ENCODE measurements at regions of chr1 and their contacts with region 1.

Region 1: DNA sequence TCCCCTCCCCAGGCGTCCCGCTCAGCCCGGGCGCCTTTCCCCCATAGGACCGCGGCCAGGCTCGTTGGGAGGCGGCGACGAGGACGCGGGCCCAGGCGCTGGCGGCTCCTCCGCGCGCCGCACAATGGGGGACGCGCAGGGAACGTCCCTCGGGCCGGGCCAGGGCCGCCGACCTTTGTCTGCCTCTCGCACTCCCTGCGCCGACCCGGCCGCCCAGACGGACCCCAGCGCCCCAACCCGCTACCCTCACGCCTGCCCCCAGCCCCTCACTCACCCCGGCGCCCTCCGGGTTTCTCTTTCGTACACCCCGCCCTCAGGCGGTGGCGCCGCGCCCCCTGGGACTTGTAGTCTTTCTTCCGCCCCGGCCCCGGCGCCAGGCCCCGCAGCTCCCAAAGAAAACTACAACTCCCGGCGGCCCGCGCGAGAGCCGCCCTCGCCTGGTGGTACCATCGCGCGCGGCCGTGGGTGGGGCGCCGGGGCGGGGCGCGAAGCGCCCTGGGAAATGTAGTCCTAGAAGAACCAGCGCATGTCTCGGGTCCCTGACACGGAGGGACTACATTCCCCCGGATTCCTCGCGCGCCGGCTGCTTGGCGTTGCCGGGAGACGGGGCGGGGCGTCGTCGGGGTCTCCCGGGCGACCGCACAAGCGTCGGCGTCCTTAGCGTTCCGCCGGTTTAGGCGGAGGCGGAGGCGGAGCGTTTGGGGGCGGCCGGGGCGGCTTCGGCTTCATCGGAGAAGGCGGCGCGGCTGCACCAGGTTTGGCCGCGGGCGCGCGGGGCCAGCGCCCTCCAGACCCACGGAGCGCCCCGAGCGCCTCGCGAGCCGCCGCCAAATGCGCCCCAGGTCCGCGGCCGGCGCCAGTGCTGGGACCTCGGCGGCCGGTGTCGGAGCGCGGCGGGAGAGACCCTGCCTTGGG is at the start of gene C1orf159:
- DNase-seq: peak; percentile 96 to 99 (median 98)
- ATAC-seq: peak; percentile 97
- H3K4me3 ChIP-seq: peak within 1 kb of the TSS; percentile 59
- H3K4me3 Mint-ChIP-seq: peak within 1 kb of the TSS; percentile 74 to 90 (median 86)
- H3K27ac ChIP-seq: peak within 1 kb of the TSS; percentile 76
- H3K27ac Mint-ChIP-seq: peak within 1 kb of the TSS in 7 of 9 donors; percentile 66 to 90 (median 77)
- H3K4me1 ChIP-seq: peaks cover 0 to 4% of the 10 kb centered on the region in 2 donors
- H3K4me1 Mint-ChIP-seq: peaks cover 0 to 20% (median 13%) of the 10 kb centered on the region in 7 donors
- H3K27me3 ChIP-seq: no peaks in the 10 kb centered on the region
- H3K27me3 Mint-ChIP-seq: peaks cover 0 to 13% (median 0%) of the 10 kb centered on the region in 5 donors
- total RNA-seq, gene C1orf159: 17.6 to 21.9 (median 19.6) TPM

Region 2: GRCh38 chr1:1019122-1019999 is 96.7 kb before region 1 on chr1:
- CTCF ChIA-PET with region 1: no interaction called
- POLR2A ChIA-PET with region 1: interaction called, 3 read pairs
- intact Hi-C with region 1: loop called in 1 of 2 experiments (anchors 1 kb)
- DNase-seq: peak; percentile 69 to 90 (median 82)
- ATAC-seq: peak; percentile 93
- H3K4me3 ChIP-seq: peak overlapping the region; percentile 11
- H3K4me3 Mint-ChIP-seq: peak overlapping the region in 9 of 10 donors; percentile 48 to 80 (median 68)
- H3K27ac ChIP-seq: peak overlapping the region; percentile 27
- H3K27ac Mint-ChIP-seq: peak overlapping the region in 4 of 9 donors; percentile 40 to 65 (median 55)
- H3K4me1 ChIP-seq: peaks cover 4 to 10% of the 10 kb centered on the region in 2 donors
- H3K4me1 Mint-ChIP-seq: peaks cover 9 to 26% (median 15%) of the 10 kb centered on the region in 7 donors
- H3K27me3 ChIP-seq: no peaks in the 10 kb centered on the region
- H3K27me3 Mint-ChIP-seq: peaks cover 0 to 17% (median 0%) of the 10 kb centered on the region in 5 donors

Region 3: GRCh38 chr1:1069061-1069708 is 46.9 kb before region 1 on chr1:
- CTCF ChIA-PET with region 1: no interaction called
- POLR2A ChIA-PET with region 1: no interaction called
- intact Hi-C with region 1: loop called in 1 of 2 experiments (anchors 1 kb)
- DNase-seq: peak; percentile 86 to 98 (median 92)
- ATAC-seq: peak; percentile 83
- H3K4me3 ChIP-seq: peak overlapping the region; percentile 81
- H3K4me3 Mint-ChIP-seq: peak overlapping the region; percentile 52 to 88 (median 78)
- H3K27ac ChIP-seq: peak overlapping the region; percentile 73
- H3K27ac Mint-ChIP-seq: peak overlapping the region in 6 of 9 donors; percentile 36 to 88 (median 72)
- H3K4me1 ChIP-seq: peaks cover 4 to 10% of the 10 kb centered on the region in 2 donors
- H3K4me1 Mint-ChIP-seq: peaks cover 0 to 9% (median 3%) of the 10 kb centered on the region in 7 donors
- H3K27me3 ChIP-seq: no peaks in the 10 kb centered on the region
- H3K27me3 Mint-ChIP-seq: no peaks in the 10 kb centered on the region

Region 4: GRCh38 chr1:1128454-1129139 is 12.6 kb after region 1 on chr1:
- CTCF ChIA-PET with region 1: no interaction called
- POLR2A ChIA-PET with region 1: no interaction called
- intact Hi-C with region 1: no loop called
- DNase-seq: no peak
- ATAC-seq: no peak
- H3K4me3 ChIP-seq: no peak overlapping the region
- H3K4me3 Mint-ChIP-seq: no peak overlapping the region
- H3K27ac ChIP-seq: no peak overlapping the region
- H3K27ac Mint-ChIP-seq: no peak overlapping the region
- H3K4me1 ChIP-seq: no peaks in the 10 kb centered on the region
- H3K4me1 Mint-ChIP-seq: peaks cover 0 to 5% (median 0%) of the 10 kb centered on the region in 7 donors
- H3K27me3 ChIP-seq: no peaks in the 10 kb centered on the region
- H3K27me3 Mint-ChIP-seq: no peaks in the 10 kb centered on the region

Region 5: DNA sequence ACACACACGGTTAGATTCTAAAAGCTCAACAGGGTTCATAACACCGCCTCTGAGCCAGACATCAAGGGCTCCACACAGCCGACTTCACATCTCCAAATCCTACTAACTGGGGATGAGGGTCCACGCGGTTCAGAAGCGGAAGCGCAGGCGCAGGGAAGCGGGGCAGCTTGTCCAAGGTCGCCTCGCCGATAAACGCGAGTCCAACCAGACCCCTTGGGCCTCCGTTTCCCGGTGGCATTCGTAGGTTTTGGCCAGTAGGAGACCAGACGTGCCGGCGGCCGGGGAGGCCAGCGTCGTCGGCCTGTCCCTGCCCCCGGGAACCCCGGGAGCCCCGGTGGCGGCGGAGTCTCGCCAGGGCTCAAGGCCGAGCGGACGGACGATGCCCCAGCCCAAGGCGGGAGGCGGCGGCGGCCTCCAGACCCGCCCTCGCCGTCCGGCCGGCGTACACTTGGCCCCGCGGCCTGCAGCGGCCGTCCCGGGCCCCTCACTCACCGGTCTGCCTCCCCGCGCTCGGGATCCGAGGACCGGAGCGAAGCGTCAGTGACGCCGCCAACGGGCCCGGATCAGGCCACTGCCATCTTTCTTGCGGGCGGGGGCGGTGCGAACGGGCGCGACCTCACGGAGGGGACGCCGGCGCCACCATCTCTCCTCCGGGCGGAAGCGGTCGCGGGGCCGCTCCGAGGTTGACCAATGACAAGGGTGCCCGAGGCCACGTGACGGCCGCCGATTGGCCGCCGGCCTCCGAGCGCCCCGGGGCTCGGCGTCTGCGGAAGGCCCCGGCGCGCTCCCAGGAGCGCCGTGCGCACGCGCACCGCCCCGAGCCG is 115.6 kb after region 1 on chr1 and contains the start of gene SDF4:
- CTCF ChIA-PET with region 1: no interaction called
- POLR2A ChIA-PET with region 1: no interaction called
- intact Hi-C with region 1: loop called (anchors 1 kb)
- DNase-seq: peak; percentile 90 to 98 (median 96)
- ATAC-seq: peak; percentile 96
- H3K4me3 ChIP-seq: peak within 1 kb of the TSS; percentile 90
- H3K4me3 Mint-ChIP-seq: peak within 1 kb of the TSS; percentile 89 to 96 (median 93)
- H3K27ac ChIP-seq: peak within 1 kb of the TSS; percentile 96
- H3K27ac Mint-ChIP-seq: peak within 1 kb of the TSS; percentile 68 to 94 (median 92)
- H3K4me1 ChIP-seq: peaks cover 12 to 28% of the 10 kb centered on the region in 2 donors
- H3K4me1 Mint-ChIP-seq: peaks cover 16 to 42% (median 33%) of the 10 kb centered on the region in 7 donors
- H3K27me3 ChIP-seq: no peaks in the 10 kb centered on the region
- H3K27me3 Mint-ChIP-seq: no peaks in the 10 kb centered on the region
- total RNA-seq, gene SDF4: 75.8 to 124 (median 110) TPM

Region 6: DNA sequence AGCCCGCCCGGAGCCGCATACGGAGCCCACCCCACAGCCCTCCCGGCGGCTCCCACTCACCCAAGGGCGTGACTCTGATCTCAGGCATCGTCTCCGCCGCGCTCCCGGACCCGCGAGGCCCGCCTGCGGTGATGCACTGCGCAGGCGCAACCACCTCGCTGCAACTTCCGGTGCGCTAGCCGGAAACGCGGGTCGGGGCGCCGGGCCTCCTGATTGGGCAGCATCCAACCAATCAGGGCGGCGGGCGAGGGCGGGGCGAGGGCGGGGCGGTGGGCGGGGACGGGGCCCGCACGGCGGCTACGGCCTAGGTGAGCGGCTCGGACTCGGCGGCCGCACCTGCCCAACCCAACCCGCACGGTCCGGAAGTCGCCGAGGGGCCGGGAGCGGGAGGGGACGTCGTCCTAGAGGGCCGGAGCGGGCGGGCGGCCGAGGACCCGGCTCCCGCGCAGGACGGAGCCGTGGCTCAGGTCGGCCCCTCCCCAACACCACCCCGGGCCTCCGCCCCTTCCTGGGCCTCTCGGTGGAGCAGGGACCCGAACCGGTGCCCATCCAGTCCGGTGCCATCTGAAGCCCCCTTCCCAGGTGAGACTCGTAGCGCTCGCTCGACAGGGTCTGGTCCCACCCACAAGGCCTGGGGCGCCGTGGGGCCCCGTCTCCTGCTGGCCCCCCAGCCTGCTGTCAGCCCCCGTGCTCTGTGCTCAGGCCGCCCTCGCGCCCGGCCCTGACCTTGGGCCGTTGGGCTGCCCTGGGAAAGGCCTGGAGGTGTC is 208.7 kb after region 1 on chr1 and contains the starts of genes CPTP and INTS11:
- CTCF ChIA-PET with region 1: interaction called, 3 read pairs
- POLR2A ChIA-PET with region 1: no interaction called
- intact Hi-C with region 1: loop called in 1 of 2 experiments (anchors 1 kb)
- DNase-seq: peak; percentile 93 to 97 (median 95)
- ATAC-seq: peak; percentile 93
- H3K4me3 ChIP-seq: peak within 1 kb of the TSS; percentile 77
- H3K4me3 Mint-ChIP-seq: peak within 1 kb of the TSS; percentile 83 to 96 (median 90)
- H3K27ac ChIP-seq: peak within 1 kb of the TSS; percentile 92
- H3K27ac Mint-ChIP-seq: peak within 1 kb of the TSS; percentile 67 to 94 (median 91)
- H3K4me1 ChIP-seq: peaks cover 18 to 34% of the 10 kb centered on the region in 2 donors
- H3K4me1 Mint-ChIP-seq: peaks cover 12 to 53% (median 31%) of the 10 kb centered on the region in 7 donors
- H3K27me3 ChIP-seq: no peaks in the 10 kb centered on the region
- H3K27me3 Mint-ChIP-seq: no peaks in the 10 kb centered on the region
- total RNA-seq, gene CPTP: 11.5 to 29.3 (median 19.1) TPM
- total RNA-seq, gene INTS11: 126 to 187 (median 161) TPM

Region 7: GRCh38 chr1:1406817-1407635 is 291.0 kb after region 1 on chr1 and contains the start of gene MRPL20:
- CTCF ChIA-PET with region 1: no interaction called
- POLR2A ChIA-PET with region 1: no interaction called
- intact Hi-C with region 1: loop called in 1 of 2 experiments (anchors 1 kb)
- DNase-seq: peak; percentile 88 to 96 (median 94)
- ATAC-seq: peak; percentile 97
- H3K4me3 ChIP-seq: peak within 1 kb of the TSS; percentile 89
- H3K4me3 Mint-ChIP-seq: peak within 1 kb of the TSS; percentile 83 to 96 (median 93)
- H3K27ac ChIP-seq: peak within 1 kb of the TSS; percentile 89
- H3K27ac Mint-ChIP-seq: peak within 1 kb of the TSS; percentile 90 to 97 (median 94)
- H3K4me1 ChIP-seq: peaks cover 19 to 20% of the 10 kb centered on the region in 2 donors
- H3K4me1 Mint-ChIP-seq: peaks cover 0 to 59% (median 35%) of the 10 kb centered on the region in 7 donors
- H3K27me3 ChIP-seq: no peaks in the 10 kb centered on the region
- H3K27me3 Mint-ChIP-seq: peaks cover 0 to 1% (median 0%) of the 10 kb centered on the region in 5 donors
- total RNA-seq, gene MRPL20: 91.2 to 135 (median 122) TPM

Region 8: DNA sequence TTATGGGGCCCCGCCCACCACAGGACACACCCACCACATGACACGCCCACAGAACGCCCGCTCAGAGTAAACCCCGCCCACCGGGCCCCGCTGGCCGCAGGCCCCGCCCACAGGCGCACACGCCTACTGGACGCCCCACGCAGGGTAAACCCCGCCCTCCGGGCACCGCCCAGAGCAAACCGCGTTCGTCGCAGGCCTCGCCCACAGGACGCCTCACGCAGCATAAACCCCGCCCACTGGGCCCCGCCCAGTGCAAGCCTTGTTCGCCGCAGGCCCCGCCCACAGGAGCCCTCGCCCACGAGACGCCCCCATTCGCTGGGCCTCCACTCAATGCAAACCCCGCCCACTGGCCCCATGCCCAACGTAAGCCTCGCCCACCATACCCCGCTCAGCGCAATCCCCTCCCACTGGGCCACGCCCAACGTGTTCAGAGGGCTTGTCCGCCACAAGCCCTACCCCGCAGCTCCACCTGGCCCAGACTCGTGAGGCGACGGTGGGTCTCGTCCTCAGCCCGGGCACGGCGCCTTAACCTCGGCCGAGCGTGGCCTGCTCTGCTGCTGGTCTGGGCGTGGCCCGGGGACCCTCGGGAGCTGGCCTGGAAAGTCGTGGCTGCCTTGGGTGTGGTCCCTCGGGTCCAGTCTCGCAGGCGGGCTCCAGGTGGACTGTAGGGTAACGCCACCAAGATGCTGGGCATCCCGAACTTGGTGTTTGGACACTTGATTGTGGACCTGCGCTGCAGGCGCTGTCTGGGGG is 803.4 kb after region 1 on chr1:
- CTCF ChIA-PET with region 1: no interaction called
- POLR2A ChIA-PET with region 1: no interaction called
- intact Hi-C with region 1: loop called in 1 of 2 experiments (anchors 1 kb)
- DNase-seq: peak; percentile 99 to 100 (median 100)
- ATAC-seq: peak; percentile 95
- H3K4me3 ChIP-seq: peak overlapping the region; percentile 61
- H3K4me3 Mint-ChIP-seq: peak overlapping the region; percentile 52 to 79 (median 68)
- H3K27ac ChIP-seq: peak overlapping the region; percentile 58
- H3K27ac Mint-ChIP-seq: peak overlapping the region in 8 of 9 donors; percentile 51 to 89 (median 82)
- H3K4me1 ChIP-seq: peaks cover 7 to 16% of the 10 kb centered on the region in 2 donors
- H3K4me1 Mint-ChIP-seq: peaks cover 0 to 7% (median 0%) of the 10 kb centered on the region in 7 donors
- H3K27me3 ChIP-seq: no peaks in the 10 kb centered on the region
- H3K27me3 Mint-ChIP-seq: peaks cover 0 to 4% (median 0%) of the 10 kb centered on the region in 5 donors

Measured in naive thymus-derived CD4-positive, alpha-beta T cell (primary cell).